MCF 10A (cell line): ENCODE measurements at regions of chr3 and their contacts with region 1.

Region 1: DNA sequence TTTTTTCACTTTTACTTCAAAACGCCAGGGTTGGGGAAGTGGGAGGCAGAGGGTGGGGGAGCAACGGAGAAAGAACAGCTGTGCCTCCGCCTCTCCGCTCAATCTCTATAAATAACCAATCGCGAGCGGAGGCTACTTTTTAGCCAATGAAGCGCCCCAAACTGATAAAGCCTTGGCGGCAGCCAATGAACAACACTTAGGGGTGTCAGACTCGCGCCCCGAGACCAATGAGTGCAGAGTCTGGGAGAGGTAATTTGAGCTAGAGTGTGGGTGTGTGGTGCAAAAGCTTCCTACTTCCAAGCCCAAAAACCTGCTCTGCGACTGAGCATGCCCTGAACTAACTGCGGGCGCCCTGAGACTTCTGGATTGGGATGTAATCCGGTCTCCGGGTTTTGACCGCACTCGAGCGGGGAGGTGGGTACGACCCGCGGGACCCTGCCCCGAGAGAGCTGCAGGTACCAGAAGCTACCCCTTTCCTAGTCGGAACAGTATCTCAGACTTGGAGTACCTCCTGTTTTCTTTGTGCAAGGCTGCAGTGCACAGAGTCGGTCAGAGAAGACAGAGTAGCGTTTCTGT is 800 bp upstream of the RAP2B start:
- DNase-seq: peak; percentile 100
- H3K4me3 Mint-ChIP-seq: peak overlapping the region; percentile 77
- H3K27ac Mint-ChIP-seq: peak overlapping the region; percentile 92
- H3K4me1 Mint-ChIP-seq: peaks cover 23% of the 10 kb centered on the region
- H3K27me3 Mint-ChIP-seq: no peaks in the 10 kb centered on the region
- CTCF ChIP-seq: no peak

Region 2: GRCh38 chr3:153052096-153052460 is 109.1 kb before region 1 on chr3:
- CTCF ChIA-PET with region 1: interaction called, 4 read pairs
- POLR2A ChIA-PET with region 1: interaction called, 254 read pairs
- intact Hi-C with region 1: no loop called
- DNase-seq: peak; percentile 90
- H3K4me3 Mint-ChIP-seq: peak overlapping the region; percentile 5
- H3K27ac Mint-ChIP-seq: peak overlapping the region; percentile 64
- H3K4me1 Mint-ChIP-seq: peaks cover 14% of the 10 kb centered on the region
- H3K27me3 Mint-ChIP-seq: no peaks in the 10 kb centered on the region
- CTCF ChIP-seq: no peak

Region 3: DNA sequence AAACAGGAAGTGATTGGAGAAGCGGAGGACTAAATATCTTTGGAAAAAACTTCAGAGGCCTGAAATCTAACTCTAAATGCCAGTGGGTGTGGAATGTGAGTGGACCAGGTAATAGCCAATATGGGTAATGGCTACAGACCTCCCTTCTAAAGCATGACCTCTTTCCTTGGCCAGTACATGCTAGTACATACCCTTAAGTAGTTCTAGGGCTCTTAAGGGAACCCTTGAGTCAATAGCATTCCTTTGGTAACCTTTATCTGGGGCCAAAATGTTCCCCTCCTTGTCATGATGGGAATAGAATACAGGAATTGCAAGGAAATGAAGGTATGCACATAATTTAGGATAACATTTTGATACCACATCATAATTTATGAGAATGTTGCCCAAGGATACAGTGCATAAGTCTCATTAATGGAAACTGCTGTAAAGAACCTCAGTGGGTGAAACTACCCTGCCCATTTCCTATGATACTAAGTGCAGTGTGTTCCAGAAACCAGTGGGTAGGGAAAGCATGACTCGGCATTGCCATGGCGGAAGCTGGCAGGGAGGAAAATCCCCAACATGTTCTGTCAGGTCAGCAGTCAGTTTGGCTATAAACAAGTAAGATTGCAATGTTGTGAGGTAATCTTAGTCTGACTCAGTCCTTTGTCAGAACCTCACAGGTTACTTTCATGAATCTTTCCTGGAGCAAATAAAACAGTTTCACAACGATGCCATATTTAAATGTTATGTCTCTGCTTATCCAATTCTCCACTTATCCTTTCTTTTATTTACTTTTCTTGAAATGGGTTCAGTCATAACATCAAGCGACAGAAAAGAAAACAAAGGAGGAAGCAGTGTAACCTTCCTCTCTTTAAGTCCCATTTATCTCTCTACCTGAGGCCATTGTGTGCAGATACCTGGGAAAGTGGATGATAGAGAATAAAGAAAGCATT is 22.7 kb before region 1 on chr3:
- CTCF ChIA-PET with region 1: interaction called, 23 read pairs
- POLR2A ChIA-PET with region 1: interaction called, 456 read pairs
- intact Hi-C with region 1: loop called (anchors 1 kb)
- DNase-seq: peak; percentile 99
- H3K4me3 Mint-ChIP-seq: peak overlapping the region; percentile 19
- H3K27ac Mint-ChIP-seq: peak overlapping the region; percentile 90
- H3K4me1 Mint-ChIP-seq: peaks cover 31% of the 10 kb centered on the region
- H3K27me3 Mint-ChIP-seq: no peaks in the 10 kb centered on the region
- CTCF ChIP-seq: no peak

Region 4: DNA sequence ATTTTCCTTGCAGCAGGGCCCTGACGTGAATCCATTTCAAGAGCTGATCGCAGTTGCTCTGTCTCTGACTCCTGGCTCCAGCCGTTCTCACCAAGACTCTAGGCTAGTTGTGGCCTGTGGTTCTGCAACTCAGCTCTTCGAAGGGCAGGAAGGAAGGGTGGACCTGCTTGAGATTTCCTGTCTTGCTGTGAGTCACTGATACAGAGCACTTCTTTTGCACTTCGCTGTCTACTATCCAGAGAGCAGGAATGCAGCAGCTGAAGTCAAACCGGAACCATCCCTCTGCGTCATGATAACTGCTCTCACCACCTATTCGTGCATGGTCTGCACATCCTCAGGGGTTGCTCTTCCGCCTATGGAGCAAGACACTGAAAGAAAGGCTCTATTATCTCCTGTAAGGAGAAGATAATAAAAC is 60.5 kb after region 1 on chr3:
- CTCF ChIA-PET with region 1: interaction called, 3 read pairs
- POLR2A ChIA-PET with region 1: interaction called, 14 read pairs
- intact Hi-C with region 1: no loop called
- DNase-seq: peak; percentile 89
- H3K4me3 Mint-ChIP-seq: peak overlapping the region; percentile 45
- H3K27ac Mint-ChIP-seq: peak overlapping the region; percentile 87
- H3K4me1 Mint-ChIP-seq: peaks cover 17% of the 10 kb centered on the region
- H3K27me3 Mint-ChIP-seq: no peaks in the 10 kb centered on the region
- CTCF ChIP-seq: no peak

Region 5: GRCh38 chr3:153284282-153284938 is 123.2 kb after region 1 on chr3:
- CTCF ChIA-PET with region 1: interaction called, 35 read pairs
- POLR2A ChIA-PET with region 1: interaction called, 160 read pairs
- intact Hi-C with region 1: no loop called
- DNase-seq: peak; percentile 79
- H3K4me3 Mint-ChIP-seq: peak overlapping the region; percentile 6
- H3K27ac Mint-ChIP-seq: peak overlapping the region; percentile 93
- H3K4me1 Mint-ChIP-seq: peaks cover 30% of the 10 kb centered on the region
- H3K27me3 Mint-ChIP-seq: no peaks in the 10 kb centered on the region
- CTCF ChIP-seq: no peak

Region 6: GRCh38 chr3:153439777-153440176 is 278.6 kb after region 1 on chr3:
- CTCF ChIA-PET with region 1: interaction called, 3 read pairs
- POLR2A ChIA-PET with region 1: no interaction called
- intact Hi-C with region 1: loop called (anchors 10 kb)
- DNase-seq: peak; percentile 23
- H3K4me3 Mint-ChIP-seq: no peak overlapping the region
- H3K27ac Mint-ChIP-seq: no peak overlapping the region
- H3K4me1 Mint-ChIP-seq: no peaks in the 10 kb centered on the region
- H3K27me3 Mint-ChIP-seq: no peaks in the 10 kb centered on the region
- CTCF ChIP-seq: no peak

Region 7: GRCh38 chr3:153768561-153769469 is 607.6 kb after region 1 on chr3:
- CTCF ChIA-PET with region 1: interaction called, 4 read pairs
- POLR2A ChIA-PET with region 1: interaction called, 3 read pairs
- intact Hi-C with region 1: loop called (anchors 1 kb)
- DNase-seq: peak; percentile 59
- H3K4me3 Mint-ChIP-seq: no peak overlapping the region
- H3K27ac Mint-ChIP-seq: no peak overlapping the region
- H3K4me1 Mint-ChIP-seq: peaks cover 6% of the 10 kb centered on the region
- H3K27me3 Mint-ChIP-seq: no peaks in the 10 kb centered on the region
- CTCF ChIP-seq: peak; percentile 81